ENCODE measurements at regions of chr4 and their contacts with region 1.

Region 1: DNA sequence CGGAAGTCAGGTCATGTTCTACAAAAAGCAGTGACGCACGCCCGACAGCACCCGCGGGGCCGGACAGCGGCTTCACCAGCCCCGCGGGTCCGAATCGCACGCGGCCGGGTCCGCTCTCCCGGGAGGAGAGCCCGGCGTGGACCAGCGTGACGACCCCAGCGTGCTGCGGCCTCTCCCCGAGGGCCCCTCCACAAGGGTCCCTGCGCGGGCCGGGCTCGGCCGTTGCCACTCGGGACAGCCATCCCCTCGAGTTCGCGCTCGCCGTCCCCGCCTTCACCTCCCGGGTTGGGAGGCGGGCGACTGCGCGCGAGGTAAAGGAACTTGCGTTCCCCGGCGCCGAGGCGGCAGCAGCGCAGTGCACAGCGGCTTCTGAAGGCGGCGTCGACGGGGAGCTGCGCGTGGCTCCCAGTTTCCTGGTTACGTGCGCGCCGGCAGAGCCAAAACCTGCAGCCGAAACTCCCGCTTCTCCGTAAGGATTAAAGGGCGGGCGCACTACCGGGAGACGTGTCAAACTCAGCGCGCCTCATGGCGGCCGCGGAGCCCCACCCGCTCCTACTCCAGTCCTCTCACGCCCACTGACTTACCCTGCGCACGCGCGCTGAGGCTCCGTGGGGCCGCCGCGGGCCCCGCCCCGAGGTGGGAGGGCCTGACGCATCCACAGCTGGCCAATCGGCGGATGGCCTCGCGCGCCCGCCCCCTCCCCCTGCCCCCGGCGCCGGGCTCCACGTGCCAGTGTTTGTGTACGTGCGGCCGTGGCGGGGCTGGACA is 416 bp upstream of the LRP2BP start:
- DNase-seq: peak; percentile 97
- ATAC-seq: peak; percentile 98

Region 2: DNA sequence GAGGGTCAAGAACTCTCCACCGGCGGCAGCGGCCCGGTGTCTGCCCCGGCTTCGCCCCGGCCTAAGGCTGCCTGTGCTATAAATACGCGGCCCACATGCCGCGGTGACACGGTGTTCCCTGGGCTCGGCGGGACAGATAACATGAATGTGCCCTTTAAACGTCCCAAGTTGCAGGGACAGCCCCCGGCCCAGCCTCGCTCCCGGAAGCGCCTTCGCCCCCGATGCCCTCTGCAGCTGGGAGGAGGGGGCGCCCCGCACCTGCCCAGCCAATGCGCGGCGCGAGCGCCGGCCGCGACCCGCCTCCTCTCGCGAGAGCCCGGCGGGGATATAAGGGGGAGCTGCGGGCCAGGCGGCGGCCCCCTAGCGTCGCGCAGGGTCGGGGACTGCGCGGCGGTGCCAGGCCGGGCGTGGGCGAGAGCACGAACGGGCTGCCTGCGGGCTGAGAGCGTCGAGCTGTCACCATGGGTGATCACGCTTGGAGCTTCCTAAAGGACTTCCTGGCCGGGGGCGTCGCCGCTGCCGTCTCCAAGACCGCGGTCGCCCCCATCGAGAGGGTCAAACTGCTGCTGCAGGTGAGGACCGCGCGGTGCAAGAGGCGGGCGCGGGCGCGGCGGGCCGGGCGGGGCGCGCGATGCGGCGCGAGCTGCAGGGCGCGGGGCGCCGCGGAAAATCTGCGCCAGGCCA is 253.1 kb before region 1 on chr4 and contains the start of gene SLC25A4:
- intact Hi-C with region 1: loop called (anchors 10 kb)
- DNase-seq: peak; percentile 94
- ATAC-seq: peak; percentile 92
- total RNA-seq, gene SLC25A4: 2,233 TPM

Region 3: DNA sequence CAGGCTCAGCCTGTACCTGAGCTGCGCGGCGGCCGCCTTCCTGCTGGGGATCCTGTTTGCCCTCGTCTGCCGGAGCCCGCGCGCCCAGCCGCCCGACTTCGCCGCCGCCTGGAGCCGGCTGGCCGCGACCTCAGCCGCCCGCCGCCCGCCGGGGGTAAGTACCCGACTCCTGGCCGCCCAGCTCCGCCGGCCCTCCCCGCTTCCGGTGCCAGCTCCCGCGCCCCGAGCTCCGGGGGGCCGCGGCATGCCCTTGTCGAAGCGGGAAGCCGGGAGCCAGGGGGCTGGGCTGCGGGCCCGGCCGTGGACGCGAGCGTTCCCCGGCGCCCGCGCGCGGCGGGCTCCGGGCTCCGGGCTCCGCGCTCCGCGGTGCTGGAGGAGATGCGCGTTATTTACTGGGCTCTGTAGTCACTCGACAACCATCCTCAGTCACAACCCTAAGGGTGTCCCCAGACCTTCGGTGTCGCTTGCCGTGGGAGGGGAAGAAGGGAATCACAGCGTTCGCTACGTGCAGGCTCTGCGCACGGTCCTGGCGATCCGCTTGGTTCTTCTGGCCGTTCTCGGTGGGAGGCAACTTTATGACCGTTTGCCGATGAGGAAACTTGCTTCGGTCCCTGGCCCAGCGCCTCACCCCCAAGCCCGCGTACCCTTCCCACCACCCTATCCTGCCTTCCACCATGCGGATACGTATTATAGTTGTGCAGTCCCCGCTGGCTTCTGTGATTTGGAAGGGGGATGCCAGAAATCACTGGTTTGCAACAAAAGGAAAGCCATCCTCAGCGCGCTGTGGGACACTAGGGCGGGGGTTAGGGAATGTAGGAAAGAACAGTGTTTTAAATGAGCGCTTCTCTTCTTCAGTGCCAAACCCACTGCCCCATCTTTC is 185.8 kb before region 1 on chr4:
- intact Hi-C with region 1: loop called (anchors 2 kb)
- DNase-seq: peak; percentile 78
- ATAC-seq: peak; percentile 33

Region 4: GRCh38 chr4:185425647-185426352 is 29.7 kb after region 1 on chr4 and contains the start of gene UFSP2:
- intact Hi-C with region 1: loop called (anchors 2 kb)
- DNase-seq: peak; percentile 95
- ATAC-seq: peak; percentile 97
- total RNA-seq, gene UFSP2: 42.0 TPM

Region 5: GRCh38 chr4:185597532-185598188 is 201.5 kb after region 1 on chr4:
- intact Hi-C with region 1: loop called (anchors 10 kb)
- DNase-seq: peak; percentile 80
- ATAC-seq: peak; percentile 56